Right ventricle myocardium inferior (tissue), 1 donor: ENCODE measurements at regions of chr9 and their contacts with region 1.

Region 1: DNA sequence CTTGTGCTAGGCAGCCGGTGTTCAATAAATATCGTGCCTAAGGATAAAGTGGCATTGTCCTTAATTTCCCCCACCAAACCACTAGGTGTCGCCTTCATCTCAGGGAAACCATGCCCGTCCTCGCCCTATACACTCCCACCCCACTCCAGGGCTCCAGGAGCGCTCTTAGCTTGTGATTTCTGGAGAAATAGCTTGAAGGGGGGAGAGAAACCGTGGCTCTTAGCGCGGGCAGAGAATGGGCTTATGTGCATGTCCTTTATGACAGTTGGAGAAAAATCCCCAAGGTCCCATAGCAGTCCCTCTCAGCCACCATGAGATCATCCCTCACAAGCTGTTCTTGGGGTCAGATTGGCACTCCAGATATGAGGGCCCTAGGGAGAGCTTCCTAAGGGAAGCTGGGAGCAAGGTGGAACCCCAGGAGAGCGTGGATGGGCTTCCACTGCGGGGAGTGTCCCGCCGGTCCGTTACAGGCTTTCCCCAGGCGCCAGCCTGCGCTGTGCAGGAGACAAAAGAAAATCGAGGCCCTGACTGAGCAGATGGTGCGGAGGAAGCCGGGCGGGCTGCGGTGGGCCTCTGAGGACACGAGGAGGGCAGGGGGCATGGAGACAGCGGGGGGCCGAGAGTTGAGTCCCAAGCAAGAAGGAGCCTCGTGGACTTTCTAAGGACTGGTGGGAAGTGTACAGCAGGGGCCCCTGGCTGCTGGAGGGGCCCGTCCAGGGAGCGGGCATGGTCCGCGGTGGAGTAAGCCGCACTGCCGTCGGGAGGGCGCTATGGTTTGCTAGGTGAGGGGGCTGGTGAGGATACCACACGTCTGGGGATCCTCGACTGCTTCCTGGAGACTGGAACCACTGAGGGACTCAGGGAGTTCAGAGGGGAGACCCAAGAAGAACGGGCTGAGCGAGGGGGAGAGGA is 750 bp upstream of the NPR2 start:
- DNase-seq: peak; percentile 77
- ATAC-seq: peak; percentile 90

Region 2: DNA sequence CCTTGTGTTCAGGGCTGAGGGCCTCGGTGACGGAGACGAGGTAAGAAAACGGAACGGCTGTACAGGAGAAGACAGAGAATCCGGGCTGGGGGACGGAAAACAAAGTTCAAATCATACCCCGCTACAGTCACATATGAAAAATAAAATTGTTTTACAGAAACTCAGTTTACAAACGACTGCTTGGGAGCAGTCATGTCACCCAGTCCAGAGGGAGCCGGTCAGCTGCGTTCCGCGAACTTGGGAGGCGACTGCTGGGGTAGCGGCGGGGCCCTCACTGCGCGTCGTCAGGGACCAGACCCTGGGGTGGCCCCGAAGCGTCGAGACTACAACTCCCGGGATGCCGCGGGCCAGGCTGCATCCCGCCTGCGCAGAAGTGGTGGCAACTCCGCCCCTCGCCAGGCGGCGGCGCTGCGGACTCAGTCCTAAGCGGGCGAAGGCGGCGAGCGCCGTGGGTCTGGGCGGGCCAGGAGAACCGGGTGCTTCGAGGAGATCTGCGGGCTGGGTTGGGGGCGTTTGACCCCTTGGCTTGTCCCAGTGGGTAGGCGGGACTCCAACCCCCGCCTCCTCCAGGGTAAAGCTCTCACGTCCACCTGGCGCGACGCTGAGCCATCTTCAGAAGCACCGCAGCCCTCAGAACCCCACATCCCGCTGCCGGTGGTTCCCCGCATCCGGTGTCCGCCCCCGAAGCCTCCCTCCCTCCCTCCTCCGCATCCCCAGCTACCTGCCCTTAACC is 143.9 kb before region 1 on chr9:
- intact Hi-C with region 1: no loop called
- DNase-seq: peak; percentile 97
- ATAC-seq: peak; percentile 97

Region 3: GRCh38 chr9:35814841-35815543 is 24.4 kb after region 1 on chr9 and contains the start of gene HINT2:
- intact Hi-C with region 1: loop called (anchors 2 kb)
- DNase-seq: peak; percentile 98
- ATAC-seq: peak; percentile 95
- total RNA-seq, gene HINT2: 72.7 TPM

Region 4: DNA sequence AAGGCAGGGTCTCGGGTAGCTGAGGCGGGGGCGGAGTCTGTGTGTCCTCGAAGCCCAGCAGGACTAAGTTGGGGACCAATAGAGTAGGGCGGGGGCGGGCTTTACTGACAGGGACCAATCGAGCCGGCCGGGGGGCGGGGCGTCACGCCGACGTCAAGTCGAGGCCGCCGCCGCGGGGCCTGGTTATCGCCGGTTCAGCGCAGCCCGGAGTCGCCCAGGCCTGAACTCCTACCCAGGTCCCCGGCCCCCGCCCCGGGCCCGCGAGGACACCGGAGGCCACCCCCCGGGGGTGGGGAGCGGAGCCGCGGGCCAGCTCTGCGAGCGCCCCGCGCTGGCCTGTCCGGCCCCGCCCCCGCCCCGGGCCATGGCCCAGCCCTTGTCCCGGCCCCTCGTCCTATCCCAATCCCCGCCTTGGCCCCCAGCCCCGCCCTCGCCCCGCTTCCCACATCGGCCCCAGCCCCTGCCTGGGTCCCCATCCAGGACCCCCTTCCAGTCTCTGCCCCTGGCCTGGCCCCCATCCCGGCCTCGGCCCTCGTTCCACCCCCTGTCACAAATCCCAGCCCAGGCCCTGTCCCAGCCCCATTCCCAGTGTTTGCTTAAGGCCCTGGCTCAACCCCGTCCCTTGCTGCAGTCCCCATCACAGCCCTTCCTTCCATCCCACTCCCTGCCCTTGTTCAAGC is 38.6 kb after region 1 on chr9 and contains the start of gene TMEM8B:
- intact Hi-C with region 1: loop called (anchors 2 kb)
- DNase-seq: peak; percentile 99
- ATAC-seq: peak; percentile 92
- total RNA-seq, gene TMEM8B: 13.8 TPM

Region 5: DNA sequence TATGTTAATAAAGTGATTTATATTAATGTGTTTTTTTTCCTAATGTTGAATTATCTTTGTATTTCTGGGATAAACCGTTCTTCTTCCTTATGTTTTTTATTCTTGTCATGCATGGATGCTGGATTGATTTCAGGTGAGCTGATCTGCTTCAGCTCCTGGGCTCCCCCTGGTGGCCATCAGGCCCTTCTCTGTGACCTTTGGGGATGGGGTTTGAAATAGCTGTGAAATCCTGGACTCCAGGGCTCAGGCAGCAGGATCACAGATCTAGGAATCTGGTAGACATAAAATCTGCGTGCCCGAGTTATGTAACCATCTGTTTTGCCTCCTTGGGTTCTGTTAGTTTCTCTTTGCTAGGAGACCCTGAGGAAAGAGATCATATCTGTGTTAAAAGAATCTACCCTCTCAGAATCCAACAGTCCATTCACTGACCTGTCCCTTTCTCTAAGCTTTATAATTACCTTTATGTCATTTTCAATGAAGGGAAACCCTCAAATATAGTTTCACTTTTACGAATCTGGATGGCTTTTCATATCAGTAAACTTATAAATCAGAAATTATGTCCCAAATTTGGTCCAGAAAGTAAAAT is 91.7 kb after region 1 on chr9:
- intact Hi-C with region 1: loop called (anchors 1 kb)
- DNase-seq: peak; percentile 90
- ATAC-seq: peak; percentile 81

Region 6: GRCh38 chr9:36023260-36024048 is 232.8 kb after region 1 on chr9:
- intact Hi-C with region 1: loop called (anchors 5 kb)
- DNase-seq: peak; percentile 51
- ATAC-seq: peak; percentile 34